B cell (primary cell): ENCODE measurements at regions of chr6 and their contacts with region 1.

Region 1: GRCh38 chr6:106519460-106520394 is 109.6 kb downstream of the RTN4IP1 start:
- DNase-seq: peak; percentile 81
- ATAC-seq: peak; percentile 65
- H3K4me3 ChIP-seq: peak overlapping the region; percentile 9 to 83 (median 54)
- H3K4me3 Mint-ChIP-seq: peak overlapping the region; percentile 88
- H3K27ac ChIP-seq: peak overlapping the region; percentile 81
- H3K27ac Mint-ChIP-seq: peak overlapping the region; percentile 93
- H3K4me1 ChIP-seq: peaks cover 81 to 83% of the 10 kb centered on the region in 2 donors
- H3K4me1 Mint-ChIP-seq: peaks cover 81% of the 10 kb centered on the region
- H3K27me3 ChIP-seq: no peaks in the 10 kb centered on the region
- H3K27me3 Mint-ChIP-seq: no peaks in the 10 kb centered on the region
- CTCF ChIP-seq: no peak

Region 2: DNA sequence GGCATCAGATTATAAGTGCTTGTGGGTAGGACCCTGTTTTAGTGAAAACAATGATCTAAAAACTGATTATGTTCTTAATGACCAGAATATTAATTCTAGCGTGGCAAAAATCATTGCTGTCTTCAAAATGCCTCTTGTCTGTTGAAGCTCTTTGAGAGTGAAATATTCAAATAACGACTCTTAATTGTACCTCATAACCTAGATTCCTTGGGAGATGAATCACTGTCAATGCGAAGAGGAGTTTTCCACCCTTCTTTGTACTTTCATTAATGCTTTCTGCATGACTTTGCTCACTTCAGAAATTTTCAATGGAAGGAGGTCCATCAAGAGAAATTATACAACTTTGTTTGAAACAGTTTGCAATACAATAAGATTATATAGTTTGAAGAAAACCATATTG is 87.8 kb before region 1 on chr6:
- CTCF ChIA-PET with region 1: no interaction called
- POLR2A ChIA-PET with region 1: no interaction called
- intact Hi-C with region 1: no loop called
- DNase-seq: no peak
- ATAC-seq: no peak
- H3K4me3 ChIP-seq: no peak overlapping the region
- H3K4me3 Mint-ChIP-seq: no peak overlapping the region
- H3K27ac ChIP-seq: no peak overlapping the region
- H3K27ac Mint-ChIP-seq: no peak overlapping the region
- H3K4me1 ChIP-seq: no peaks in the 10 kb centered on the region
- H3K4me1 Mint-ChIP-seq: no peaks in the 10 kb centered on the region
- H3K27me3 ChIP-seq: no peaks in the 10 kb centered on the region
- H3K27me3 Mint-ChIP-seq: peaks cover 12% of the 10 kb centered on the region
- CTCF ChIP-seq: no peak

Region 3: GRCh38 chr6:106534564-106534982 is 14.8 kb after region 1 on chr6:
- CTCF ChIA-PET with region 1: interaction called, 35 read pairs
- POLR2A ChIA-PET with region 1: interaction called, 4 read pairs
- intact Hi-C with region 1: loop called (anchors 2 kb)
- DNase-seq: no peak
- ATAC-seq: peak; percentile 14
- H3K4me3 ChIP-seq: no peak overlapping the region
- H3K4me3 Mint-ChIP-seq: no peak overlapping the region
- H3K27ac ChIP-seq: peak overlapping the region in 1 of 2 donors; percentile 68
- H3K27ac Mint-ChIP-seq: peak overlapping the region; percentile 86
- H3K4me1 ChIP-seq: peaks cover 41 to 45% of the 10 kb centered on the region in 2 donors
- H3K4me1 Mint-ChIP-seq: peaks cover 76% of the 10 kb centered on the region
- H3K27me3 ChIP-seq: no peaks in the 10 kb centered on the region
- H3K27me3 Mint-ChIP-seq: no peaks in the 10 kb centered on the region
- CTCF ChIP-seq: no peak

Region 4: DNA sequence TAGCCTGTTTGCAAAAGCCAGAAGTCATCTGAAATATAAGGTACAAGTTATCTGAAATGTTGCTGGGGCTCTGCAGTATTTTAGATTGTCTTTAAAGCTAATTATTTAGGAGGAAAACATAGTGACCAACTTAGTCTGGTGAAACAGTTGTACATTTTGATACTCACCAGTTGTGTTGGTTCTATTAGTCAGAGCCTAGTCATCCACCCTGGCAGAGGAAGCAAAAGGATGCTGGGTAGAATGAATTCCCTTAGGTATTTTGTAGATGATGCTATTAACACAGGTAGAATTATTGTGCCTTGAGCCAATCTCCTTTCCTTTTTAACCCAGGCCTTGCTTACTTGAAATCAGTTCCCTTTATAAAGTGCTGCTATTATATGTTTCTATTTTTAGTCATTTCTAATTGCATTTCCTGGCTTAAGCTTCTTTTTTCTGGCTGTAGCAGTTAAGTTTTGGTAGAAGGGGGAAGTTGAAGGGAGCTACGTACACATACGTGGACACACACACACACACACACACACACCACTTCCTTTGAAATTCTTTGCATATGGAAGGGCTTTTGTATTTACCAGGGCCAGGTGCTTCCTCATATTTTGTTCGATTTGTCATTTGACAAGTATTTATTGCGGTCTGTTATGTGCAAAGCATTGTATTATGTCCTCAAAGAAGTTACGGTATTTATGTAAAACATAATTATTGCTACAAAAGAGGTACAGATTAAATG is 27.1 kb after region 1 on chr6:
- CTCF ChIA-PET with region 1: interaction called, 156 read pairs
- POLR2A ChIA-PET with region 1: interaction called, 6 read pairs
- intact Hi-C with region 1: loop called (anchors 1 kb)
- DNase-seq: peak; percentile 86
- ATAC-seq: peak; percentile 80
- H3K4me3 ChIP-seq: peak overlapping the region in 1 of 5 experiments; percentile 42
- H3K4me3 Mint-ChIP-seq: peak overlapping the region; percentile 80
- H3K27ac ChIP-seq: peak overlapping the region; percentile 88 to 93
- H3K27ac Mint-ChIP-seq: peak overlapping the region; percentile 99
- H3K4me1 ChIP-seq: peaks cover 31 to 35% of the 10 kb centered on the region in 2 donors
- H3K4me1 Mint-ChIP-seq: peaks cover 48% of the 10 kb centered on the region
- H3K27me3 ChIP-seq: no peaks in the 10 kb centered on the region
- H3K27me3 Mint-ChIP-seq: no peaks in the 10 kb centered on the region
- CTCF ChIP-seq: no peak

Region 5: DNA sequence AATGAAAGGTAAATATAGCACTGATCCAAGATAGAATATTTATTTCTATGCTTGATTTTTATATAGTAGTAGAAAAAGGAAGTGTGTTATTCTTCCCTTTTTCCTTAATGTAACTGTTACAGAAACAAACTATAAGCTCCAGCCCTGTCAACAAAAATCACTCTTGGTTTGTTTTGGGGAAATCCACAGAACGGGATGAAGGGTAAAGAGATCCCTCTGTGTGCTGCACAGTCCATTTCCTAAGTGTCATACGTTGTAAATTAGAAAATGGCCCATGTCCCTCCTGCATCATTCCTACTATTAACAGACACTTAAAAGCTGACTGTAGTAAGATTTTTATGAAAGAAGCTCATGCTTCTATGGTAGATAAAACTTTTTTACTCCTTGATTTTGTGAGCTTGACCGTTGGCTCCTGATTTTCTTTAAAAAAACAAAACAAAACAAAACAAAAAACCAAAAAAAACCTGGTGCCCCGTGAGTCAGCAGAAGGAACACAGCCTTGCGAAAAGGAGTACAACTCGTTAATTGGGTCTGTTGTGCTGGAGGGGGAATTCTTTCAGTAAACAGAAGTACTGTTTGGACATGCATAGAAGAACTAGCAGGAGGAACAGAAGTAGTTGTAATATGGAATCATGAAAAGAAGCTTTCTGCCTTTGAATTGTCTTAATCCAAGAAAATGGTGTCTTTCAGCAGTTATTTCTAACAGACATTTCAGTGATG is 42.1 kb after region 1 on chr6:
- CTCF ChIA-PET with region 1: interaction called, 156 read pairs
- POLR2A ChIA-PET with region 1: interaction called, 4 read pairs
- intact Hi-C with region 1: no loop called
- DNase-seq: no peak
- ATAC-seq: no peak
- H3K4me3 ChIP-seq: no peak overlapping the region
- H3K4me3 Mint-ChIP-seq: no peak overlapping the region
- H3K27ac ChIP-seq: peak overlapping the region in 1 of 2 donors; percentile 29
- H3K27ac Mint-ChIP-seq: peak overlapping the region; percentile 28
- H3K4me1 ChIP-seq: no peaks in the 10 kb centered on the region
- H3K4me1 Mint-ChIP-seq: peaks cover 11% of the 10 kb centered on the region
- H3K27me3 ChIP-seq: no peaks in the 10 kb centered on the region
- H3K27me3 Mint-ChIP-seq: no peaks in the 10 kb centered on the region
- CTCF ChIP-seq: no peak

Region 6: GRCh38 chr6:107894821-107895396 is 1375.2 kb after region 1 on chr6:
- CTCF ChIA-PET with region 1: no interaction called
- POLR2A ChIA-PET with region 1: no interaction called
- intact Hi-C with region 1: loop called (anchors 10 kb)
- DNase-seq: peak; percentile 77
- ATAC-seq: peak; percentile 80
- H3K4me3 ChIP-seq: peak overlapping the region in 1 of 5 experiments; percentile 27
- H3K4me3 Mint-ChIP-seq: peak overlapping the region; percentile 48
- H3K27ac ChIP-seq: peak overlapping the region; percentile 75 to 76
- H3K27ac Mint-ChIP-seq: peak overlapping the region; percentile 96
- H3K4me1 ChIP-seq: peaks cover 49 to 53% of the 10 kb centered on the region in 2 donors
- H3K4me1 Mint-ChIP-seq: peaks cover 55% of the 10 kb centered on the region
- H3K27me3 ChIP-seq: no peaks in the 10 kb centered on the region
- H3K27me3 Mint-ChIP-seq: no peaks in the 10 kb centered on the region
- CTCF ChIP-seq: no peak